ENCODE measurements at regions of chr7 and their contacts with region 1.

Region 1: DNA sequence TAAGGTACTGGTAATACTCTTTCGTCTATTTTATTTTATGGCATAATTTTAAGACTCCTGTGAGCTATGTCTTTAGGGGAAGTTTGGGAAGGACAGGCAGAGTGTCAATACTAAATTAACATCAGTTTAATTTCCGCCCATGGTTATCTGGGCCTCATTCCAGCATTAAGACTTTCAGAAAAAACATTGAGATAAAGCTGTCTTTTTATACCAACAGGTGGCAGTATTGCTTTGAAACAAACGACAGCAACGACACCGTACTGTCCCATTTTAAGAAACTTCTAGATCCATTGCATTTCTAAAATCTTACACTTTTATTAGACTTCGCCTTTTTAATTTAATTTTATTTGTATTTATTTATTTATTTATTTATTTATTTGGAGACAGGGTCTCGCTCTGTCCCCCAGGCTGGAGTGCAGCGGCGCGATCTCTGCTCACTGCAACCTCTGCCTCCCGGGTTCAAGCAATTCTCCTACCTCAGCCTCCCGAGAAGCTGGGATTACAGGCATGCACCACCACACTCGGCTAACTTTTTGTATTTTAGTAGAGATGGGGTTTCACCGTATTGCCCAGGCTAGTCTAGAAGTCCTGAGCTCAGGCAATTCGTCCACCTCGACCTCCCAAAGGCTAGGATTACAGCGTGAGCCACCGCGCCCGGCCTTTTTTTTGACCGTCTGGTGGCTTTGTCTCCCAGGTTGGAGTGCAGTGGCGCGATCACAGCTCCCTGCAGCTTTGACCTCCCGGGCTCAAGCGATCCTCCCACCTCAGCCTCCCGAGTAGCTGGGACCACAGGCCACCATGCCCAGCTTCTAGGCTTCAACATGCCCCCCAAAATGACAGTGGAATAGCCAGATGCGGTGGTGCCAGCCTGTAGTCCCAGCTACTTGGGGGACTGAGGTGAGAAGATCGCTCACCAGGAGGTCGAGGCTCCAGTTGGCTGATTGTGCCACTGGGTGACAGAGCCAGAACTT is 78.7 kb upstream of the C1GALT1 start:
- DNase-seq: peak; percentile 57
- H3K4me3 Mint-ChIP-seq: no peak overlapping the region
- H3K27ac Mint-ChIP-seq: no peak overlapping the region
- H3K4me1 Mint-ChIP-seq: peaks cover 16% of the 10 kb centered on the region
- H3K27me3 Mint-ChIP-seq: no peaks in the 10 kb centered on the region

Region 2: DNA sequence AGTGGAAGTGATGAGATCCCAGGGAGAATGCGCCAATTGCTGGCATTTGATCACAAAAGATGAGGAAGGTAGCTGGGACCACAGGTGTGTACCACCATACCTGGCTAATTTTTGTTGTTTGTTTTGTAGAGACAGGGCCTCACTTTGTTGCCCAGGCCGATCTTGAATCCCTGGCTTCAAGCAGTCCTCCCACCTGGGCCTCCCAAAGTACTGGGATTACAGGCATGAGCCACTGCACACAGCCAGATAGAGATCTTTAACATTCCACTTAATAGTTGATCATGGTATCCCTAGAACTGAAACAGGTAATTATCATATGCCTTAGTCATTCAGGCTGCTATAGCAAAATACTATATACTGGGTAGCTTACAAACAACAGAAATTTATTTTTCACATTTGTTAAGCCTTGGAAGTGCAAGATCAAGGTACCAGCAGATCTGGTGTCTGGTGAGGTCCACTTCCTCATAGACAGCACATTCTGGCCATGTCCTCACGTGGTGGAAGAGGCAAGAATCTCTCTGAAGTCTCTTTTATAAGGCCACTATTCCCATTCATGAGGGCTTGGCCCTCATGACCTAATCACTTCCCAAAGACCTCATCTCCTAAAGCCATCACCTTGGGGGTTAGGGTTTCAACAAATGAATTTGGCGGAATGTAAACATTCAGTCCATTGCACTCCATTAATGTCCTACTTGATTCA is 59.0 kb before region 1 on chr7:
- intact Hi-C with region 1: no loop called
- DNase-seq: no peak
- H3K4me3 Mint-ChIP-seq: no peak overlapping the region
- H3K27ac Mint-ChIP-seq: no peak overlapping the region
- H3K4me1 Mint-ChIP-seq: no peaks in the 10 kb centered on the region
- H3K27me3 Mint-ChIP-seq: no peaks in the 10 kb centered on the region

Region 3: DNA sequence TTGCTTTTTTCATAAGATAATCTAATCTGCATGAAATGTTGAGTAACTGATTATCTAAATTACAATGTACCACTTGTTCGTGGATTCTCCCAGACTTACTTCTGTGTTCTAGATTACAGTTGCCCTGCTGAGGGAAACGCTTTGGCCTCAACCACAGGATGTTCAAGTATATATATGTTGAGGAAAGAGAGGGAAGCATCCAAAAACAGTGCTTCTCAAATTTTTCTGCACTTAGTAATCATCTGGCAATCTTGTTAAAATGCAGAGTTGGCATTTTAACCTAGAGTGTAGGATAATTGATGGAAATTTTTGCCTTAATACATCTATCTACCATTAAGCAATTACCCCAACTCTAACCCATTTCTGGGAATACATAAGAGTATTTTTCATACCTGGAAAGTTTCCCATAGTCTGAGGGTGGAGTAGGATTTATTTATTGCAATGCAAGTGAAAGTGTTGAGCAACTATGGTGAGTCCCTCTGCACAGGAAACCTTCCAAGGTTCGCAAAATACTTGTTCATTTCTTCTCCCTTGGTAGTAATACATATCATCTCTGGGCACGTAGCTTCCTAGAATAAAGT is 19.2 kb after region 1 on chr7:
- intact Hi-C with region 1: no loop called
- DNase-seq: no peak
- H3K4me3 Mint-ChIP-seq: no peak overlapping the region
- H3K27ac Mint-ChIP-seq: no peak overlapping the region
- H3K4me1 Mint-ChIP-seq: no peaks in the 10 kb centered on the region
- H3K27me3 Mint-ChIP-seq: peaks cover 7% of the 10 kb centered on the region

Region 4: DNA sequence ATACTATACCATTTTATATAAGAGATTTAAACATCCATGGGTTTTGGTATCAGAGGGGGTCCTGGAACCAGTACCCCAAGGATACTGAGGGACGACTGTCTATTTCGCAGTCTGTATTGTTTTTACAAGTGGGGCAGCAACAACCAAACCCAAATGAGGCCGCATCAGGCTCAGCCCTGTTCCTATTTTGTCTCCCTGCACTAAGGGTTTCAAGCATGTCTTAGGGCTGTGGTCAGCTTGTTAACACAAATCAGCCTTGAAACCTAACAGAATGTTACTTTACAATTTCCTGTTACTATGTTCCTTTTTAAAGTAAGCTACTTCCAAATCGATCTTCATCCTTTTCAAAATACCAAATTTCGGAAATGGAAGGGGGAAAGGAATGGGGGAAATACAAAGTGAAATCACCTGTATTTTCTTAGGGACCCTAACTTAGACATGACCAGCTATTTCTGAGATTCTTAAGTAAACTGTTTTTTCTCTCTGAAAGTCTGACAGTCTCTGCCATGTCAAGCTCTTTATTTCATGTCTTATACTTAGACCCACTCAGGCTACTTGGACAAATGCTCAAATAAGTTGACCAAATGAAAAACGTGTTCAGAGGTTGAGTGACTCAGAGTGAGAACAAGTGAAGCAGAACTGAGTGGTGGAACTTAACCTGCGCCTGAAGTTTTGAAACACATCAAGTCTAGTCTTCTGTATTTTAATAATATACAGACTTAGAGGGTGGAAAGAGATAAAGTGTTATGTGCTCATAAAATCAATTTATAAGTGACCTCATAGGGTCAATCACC is 154.5 kb after region 1 on chr7:
- intact Hi-C with region 1: loop called (anchors 5 kb)
- DNase-seq: peak; percentile 67
- H3K4me3 Mint-ChIP-seq: peak overlapping the region; percentile 72
- H3K27ac Mint-ChIP-seq: peak overlapping the region; percentile 83
- H3K4me1 Mint-ChIP-seq: peaks cover 31% of the 10 kb centered on the region
- H3K27me3 Mint-ChIP-seq: no peaks in the 10 kb centered on the region

Region 5: DNA sequence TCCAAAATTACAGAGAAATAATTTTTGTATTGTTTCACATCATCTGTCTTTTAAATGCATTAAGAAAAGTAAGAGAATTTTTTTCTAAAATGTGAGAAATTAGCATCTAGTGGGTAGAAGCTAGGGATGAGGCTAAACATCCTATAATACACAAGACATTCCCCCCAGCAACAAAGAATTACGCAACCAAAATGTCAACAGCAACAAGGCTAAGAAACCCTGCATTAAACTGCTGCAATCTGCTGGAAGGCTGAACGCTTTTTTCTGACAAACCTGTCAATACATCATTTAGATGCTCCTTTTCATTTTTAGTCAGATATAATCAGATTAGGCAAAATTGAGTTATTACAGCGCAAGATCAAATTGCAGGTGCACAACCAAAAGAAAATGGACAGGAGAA is 241.0 kb after region 1 on chr7:
- intact Hi-C with region 1: loop called (anchors 10 kb)
- DNase-seq: no peak
- H3K4me3 Mint-ChIP-seq: no peak overlapping the region
- H3K27ac Mint-ChIP-seq: no peak overlapping the region
- H3K4me1 Mint-ChIP-seq: no peaks in the 10 kb centered on the region
- H3K27me3 Mint-ChIP-seq: peaks cover 24% of the 10 kb centered on the region

Region 6: GRCh38 chr7:7536396-7537019 is 432.9 kb after region 1 on chr7:
- intact Hi-C with region 1: loop called (anchors 1 kb)
- DNase-seq: no peak
- H3K4me3 Mint-ChIP-seq: no peak overlapping the region
- H3K27ac Mint-ChIP-seq: no peak overlapping the region
- H3K4me1 Mint-ChIP-seq: peaks cover under 1% of the 10 kb centered on the region
- H3K27me3 Mint-ChIP-seq: peaks cover 24% of the 10 kb centered on the region

Region 7: DNA sequence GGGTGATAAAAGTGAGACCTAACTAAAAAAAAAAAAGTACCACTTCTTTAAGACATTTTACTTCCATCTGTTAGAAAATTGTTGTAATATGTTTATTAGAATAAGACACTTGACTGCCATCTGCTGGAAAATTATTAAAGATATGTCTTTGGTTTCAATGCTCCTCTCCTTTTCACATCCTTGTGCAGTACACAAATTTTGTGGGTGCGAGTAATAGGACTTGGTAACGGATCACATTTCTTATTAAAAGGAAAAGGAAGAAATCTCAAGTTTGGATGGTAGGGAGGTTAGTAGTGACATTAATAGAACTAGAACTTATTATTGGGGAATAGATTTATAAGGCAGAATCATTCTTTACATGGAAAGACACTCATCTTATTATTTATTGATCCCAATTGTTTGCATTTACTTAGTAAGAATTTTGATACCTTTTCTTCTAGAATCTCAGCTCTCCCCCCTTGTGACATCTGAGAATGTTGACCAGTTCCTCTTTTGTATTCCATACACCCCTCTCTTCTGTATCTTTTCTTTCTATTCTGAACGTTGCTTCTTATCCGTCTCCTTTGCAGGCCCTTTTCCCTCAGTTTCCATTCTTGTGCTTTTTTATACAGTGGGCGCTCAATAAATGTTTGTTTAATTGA is 657.8 kb after region 1 on chr7:
- intact Hi-C with region 1: loop called (anchors 10 kb)
- DNase-seq: peak; percentile 59
- H3K4me3 Mint-ChIP-seq: peak overlapping the region; percentile 92
- H3K27ac Mint-ChIP-seq: peak overlapping the region; percentile 88
- H3K4me1 Mint-ChIP-seq: peaks cover 30% of the 10 kb centered on the region
- H3K27me3 Mint-ChIP-seq: no peaks in the 10 kb centered on the region

Region 8: GRCh38 chr7:8295638-8296361 is 1192.2 kb after region 1 on chr7:
- intact Hi-C with region 1: loop called (anchors 5 kb)
- DNase-seq: peak; percentile 80
- H3K4me3 Mint-ChIP-seq: no peak overlapping the region
- H3K27ac Mint-ChIP-seq: no peak overlapping the region
- H3K4me1 Mint-ChIP-seq: peaks cover 3% of the 10 kb centered on the region
- H3K27me3 Mint-ChIP-seq: peaks cover 28% of the 10 kb centered on the region